ENCODE measurements at regions of chr17 and their contacts with region 1.

Region 1: GRCh38 chr17:65100316-65101140 is 36.6 kb upstream of the RGS9 start:
- DNase-seq: peak; percentile 81 to 92 (median 84)
- H3K4me3 ChIP-seq: peak overlapping the region; percentile 38 to 79 (median 62)
- H3K27ac ChIP-seq: peak overlapping the region in 44 of 59 donors; percentile 1 to 81 (median 52)
- H3K27me3 ChIP-seq: no peaks in the 10 kb centered on the region
- CTCF ChIP-seq: peak; percentile 30 to 92 (median 80)

Region 2: GRCh38 chr17:64975329-64976087 is 125.0 kb before region 1 on chr17:
- intact Hi-C with region 1: loop called (anchors 5 to 10 kb)
- DNase-seq: peak; percentile 88 to 96 (median 92)
- H3K4me3 ChIP-seq: peak overlapping the region; percentile 65 to 98 (median 87)
- H3K27ac ChIP-seq: peak overlapping the region; percentile 77 to 99 (median 97)
- H3K27me3 ChIP-seq: no peaks in the 10 kb centered on the region
- CTCF ChIP-seq: peak in 25 of 56 donors; percentile 4 to 59 (median 24)

Region 3: DNA sequence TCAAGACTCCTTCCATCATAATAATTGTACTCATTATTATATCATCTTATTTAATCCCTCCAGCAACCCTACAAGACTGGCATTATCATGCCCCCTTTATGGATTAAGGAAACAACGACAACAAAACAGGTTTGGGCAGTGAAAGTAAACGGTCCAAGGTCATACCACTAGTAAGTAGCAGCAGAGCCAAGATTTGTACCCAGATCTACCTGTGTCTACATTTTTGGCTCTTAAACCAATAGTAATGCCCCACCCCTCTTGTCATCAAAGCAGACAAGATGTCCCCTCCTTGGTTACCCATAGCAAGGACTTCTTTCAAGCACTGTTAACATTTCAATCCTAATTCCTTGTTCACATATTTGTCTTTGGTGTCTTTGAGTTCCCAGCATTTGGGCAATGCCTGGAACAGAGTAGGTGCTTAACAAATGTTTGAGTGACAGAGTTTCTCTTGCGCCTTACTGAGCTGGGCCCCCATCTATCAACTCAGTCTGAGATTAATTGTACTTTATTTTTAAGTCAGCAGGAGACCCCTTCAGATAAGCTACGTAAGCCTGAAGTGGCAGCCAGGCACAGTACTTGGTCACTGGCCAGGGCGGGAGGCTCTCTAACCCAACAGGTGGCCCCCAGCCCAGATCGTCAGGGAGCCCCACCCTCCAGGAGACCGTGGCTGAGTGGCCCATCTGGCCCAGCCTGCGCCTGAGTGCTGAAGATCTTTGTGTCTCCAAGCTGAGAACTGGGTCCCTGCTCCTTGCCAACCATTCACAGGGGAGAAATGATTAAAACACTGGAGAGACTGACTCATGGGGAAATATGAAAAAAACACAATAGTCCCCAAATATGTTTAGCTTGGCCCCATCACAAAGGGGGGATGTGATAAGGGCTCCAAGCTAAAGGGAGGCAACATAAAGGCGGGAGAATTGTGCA is 385.1 kb after region 1 on chr17:
- intact Hi-C with region 1: no loop called
- DNase-seq: peak in 2 of 10 donors; percentile 12 to 33
- H3K4me3 ChIP-seq: no peak overlapping the region
- H3K27ac ChIP-seq: no peak overlapping the region
- H3K27me3 ChIP-seq: no peaks in the 10 kb centered on the region
- CTCF ChIP-seq: no peak